Tibial artery (tissue), 4 donors: ENCODE measurements at regions of chr13 and their contacts with region 1.

Region 1: DNA sequence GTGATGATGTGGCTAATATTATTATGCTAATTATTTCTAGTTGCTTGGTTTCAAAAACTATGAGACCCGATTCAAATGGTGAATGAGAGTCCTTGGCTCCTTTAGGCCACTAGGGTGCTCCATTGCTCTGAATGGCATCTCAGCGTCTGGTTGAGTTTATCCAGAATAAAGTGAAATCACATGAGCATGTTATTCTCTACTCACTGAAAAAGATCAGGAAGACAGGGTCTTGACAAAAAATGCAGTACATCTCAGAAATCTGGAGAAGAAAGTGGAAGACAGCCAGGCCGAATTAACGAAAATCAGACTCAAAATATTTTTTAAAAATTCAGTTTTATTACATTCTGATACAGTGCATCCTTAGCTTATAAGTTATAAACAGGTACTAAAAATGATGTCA is 516.2 kb downstream of the MYO16 start:
- DNase-seq: no peak
- H3K4me3 ChIP-seq: no peak overlapping the region
- H3K27ac ChIP-seq: no peak overlapping the region
- H3K4me1 ChIP-seq: peaks cover 0 to 10% (median 3%) of the 10 kb centered on the region in 4 donors
- H3K27me3 ChIP-seq: peaks cover 0 to 6% of the 10 kb centered on the region in 2 donors
- CTCF ChIP-seq: peak; percentile 78 to 84

Region 2: DNA sequence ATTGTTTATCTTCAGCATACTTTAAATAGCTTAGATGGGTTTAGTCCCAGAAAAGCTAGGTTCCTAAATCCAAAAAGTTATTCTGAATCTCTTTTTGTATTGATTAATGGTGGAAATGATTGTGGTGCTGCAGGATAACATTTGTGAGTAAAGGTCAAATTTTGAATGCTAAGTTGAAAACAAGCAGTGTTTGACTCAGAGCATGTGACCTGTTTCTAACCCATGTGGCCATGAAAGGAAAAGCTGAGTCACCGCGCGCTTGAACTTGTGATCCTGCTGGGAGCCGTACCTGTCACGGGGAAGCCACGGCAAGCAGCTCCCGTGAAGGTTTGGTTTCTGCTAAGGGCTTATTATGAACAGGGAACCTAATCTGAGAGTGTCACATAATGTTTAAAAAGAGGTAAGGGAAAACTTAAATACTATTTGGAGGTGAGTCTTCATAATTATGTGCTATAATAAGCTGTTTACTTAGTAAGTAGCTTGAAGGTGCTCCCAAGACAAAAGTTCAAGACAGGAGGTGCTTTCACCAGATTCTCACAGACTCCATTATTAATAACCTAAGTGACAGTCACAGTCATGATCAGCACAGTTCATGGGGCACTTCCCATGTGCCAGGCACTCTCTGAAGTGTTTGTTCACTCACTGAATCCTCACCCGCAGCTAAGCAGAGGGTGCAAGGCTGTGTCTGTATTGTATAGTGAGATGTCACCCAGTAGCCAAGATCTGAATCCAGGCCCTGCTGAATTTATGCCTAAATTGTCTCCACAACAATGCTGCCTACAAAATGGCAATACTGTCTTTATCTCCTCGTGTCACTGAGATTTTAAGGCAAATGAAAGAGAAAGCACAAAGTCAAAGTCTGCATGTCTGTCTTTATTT is 229.8 kb before region 1 on chr13:
- intact Hi-C with region 1: no loop called
- DNase-seq: peak; percentile 90 to 93
- H3K4me3 ChIP-seq: peak overlapping the region; percentile 24 to 34
- H3K27ac ChIP-seq: peak overlapping the region; percentile 84
- H3K4me1 ChIP-seq: peaks cover 0 to 47% (median 19%) of the 10 kb centered on the region in 4 donors
- H3K27me3 ChIP-seq: no peaks in the 10 kb centered on the region
- CTCF ChIP-seq: no peak

Region 3: DNA sequence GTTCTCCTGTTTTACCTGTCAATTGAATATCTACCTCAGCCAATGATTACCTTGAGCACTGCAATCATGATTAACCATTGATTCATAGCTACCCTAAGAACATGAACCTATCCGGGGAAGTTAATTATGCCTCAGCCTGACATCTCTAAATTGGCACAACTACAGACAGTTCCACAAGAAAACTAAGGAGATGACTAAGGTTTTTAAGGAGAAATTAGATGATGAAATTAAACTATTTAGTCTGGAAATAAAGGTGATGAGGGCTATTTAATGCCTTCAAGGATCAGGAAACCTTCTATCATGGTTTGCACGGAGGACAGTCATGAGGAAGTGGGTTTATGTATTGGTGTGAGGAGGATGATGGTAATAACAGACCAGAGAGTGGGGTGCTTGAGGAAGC is 957.9 kb after region 1 on chr13:
- intact Hi-C with region 1: loop called (anchors 5 kb)
- DNase-seq: no peak
- H3K4me3 ChIP-seq: no peak overlapping the region
- H3K27ac ChIP-seq: no peak overlapping the region
- H3K4me1 ChIP-seq: peaks cover 0 to 27% (median 9%) of the 10 kb centered on the region in 4 donors
- H3K27me3 ChIP-seq: no peaks in the 10 kb centered on the region
- CTCF ChIP-seq: no peak